Gastrocnemius medialis (tissue), 4 donors: ENCODE measurements at regions of chr15 and their contacts with region 1.

Region 1: DNA sequence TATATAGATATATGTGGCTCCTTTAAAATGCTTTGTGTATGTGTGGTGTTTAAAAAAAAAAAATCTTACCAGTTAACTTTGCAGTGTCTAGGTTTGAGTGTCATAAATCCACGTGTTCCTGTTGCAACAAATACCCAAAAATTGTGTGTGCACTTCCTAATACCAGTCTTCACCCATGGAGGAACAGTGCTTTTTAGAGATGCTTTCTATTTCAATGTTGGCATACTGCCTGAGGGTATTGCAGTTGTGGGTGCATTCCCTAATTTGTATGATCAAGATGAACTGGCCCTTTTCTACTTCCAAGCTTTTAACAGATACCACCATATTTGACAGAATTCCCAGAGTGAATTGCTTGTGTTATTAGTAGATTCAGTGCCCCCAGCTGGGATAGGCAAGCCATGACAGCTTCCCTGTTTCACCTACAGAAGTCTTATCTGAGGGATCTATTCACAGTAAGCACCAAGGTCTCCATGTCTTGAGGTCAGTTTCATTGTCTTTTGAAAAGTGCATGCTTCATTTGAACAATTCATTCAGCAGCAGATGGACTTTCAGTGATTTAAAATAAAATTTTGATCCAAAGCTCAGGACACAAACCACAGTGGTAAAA is 68.9 kb upstream of the GOLGA6B start:
- DNase-seq: no peak
- ATAC-seq: no peak
- H3K4me3 ChIP-seq: no peak overlapping the region
- H3K27ac ChIP-seq: no peak overlapping the region
- H3K4me1 ChIP-seq: no peaks in the 10 kb centered on the region
- H3K27me3 ChIP-seq: no peaks in the 10 kb centered on the region
- CTCF ChIP-seq: no peak
- POLR2A ChIP-seq: no peak

Region 2: GRCh38 chr15:72671535-72671934 is 86.0 kb after region 1 on chr15:
- in situ Hi-C with region 1: loop called in 1 of 4 experiments (anchors 10 kb)
- intact Hi-C with region 1: no loop called
- DNase-seq: no peak
- ATAC-seq: no peak
- H3K4me3 ChIP-seq: no peak overlapping the region
- H3K27ac ChIP-seq: no peak overlapping the region
- H3K4me1 ChIP-seq: peaks cover 0 to 3% of the 10 kb centered on the region in 2 donors
- H3K27me3 ChIP-seq: peaks cover 0 to 9% (median 8%) of the 10 kb centered on the region in 3 donors
- CTCF ChIP-seq: no peak
- POLR2A ChIP-seq: no peak

Region 3: DNA sequence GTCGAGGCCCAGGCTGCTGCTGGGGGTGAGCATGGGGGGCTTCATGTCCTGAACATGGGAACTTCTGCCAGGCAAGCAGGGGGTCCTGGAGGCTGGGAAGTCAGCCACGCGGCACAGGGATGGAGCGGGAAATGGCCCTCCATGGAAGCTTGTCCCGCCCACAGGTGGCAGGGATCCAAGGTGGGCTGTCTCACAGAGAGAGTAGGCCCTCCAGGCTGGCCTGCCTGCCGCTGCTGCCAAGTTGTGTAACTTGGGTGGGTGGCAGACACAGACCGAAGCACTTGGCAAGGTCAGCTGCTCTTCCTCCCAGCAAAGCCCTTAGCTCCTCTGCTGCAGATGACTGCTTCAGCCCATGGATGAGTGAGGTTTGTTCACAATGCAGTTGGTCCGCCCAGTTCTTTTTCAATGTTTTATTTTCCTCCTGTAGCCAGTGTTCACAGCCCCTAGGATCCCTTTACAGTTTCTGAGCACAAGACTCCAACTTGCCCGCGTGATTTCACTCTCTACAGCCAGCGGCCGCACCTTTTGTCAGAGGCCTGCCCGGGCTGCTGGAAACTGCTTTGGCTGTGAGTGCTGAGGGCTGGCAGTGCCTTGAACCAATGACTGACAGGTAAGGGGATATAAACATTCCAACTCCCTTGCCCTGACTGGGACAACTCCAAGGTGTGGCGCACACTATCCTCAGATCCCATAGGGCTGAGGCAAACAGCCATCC is 756.5 kb after region 1 on chr15:
- in situ Hi-C with region 1: no loop called
- intact Hi-C with region 1: no loop called
- DNase-seq: no peak
- ATAC-seq: no peak
- H3K4me3 ChIP-seq: no peak overlapping the region
- H3K27ac ChIP-seq: no peak overlapping the region
- H3K4me1 ChIP-seq: no peaks in the 10 kb centered on the region
- H3K27me3 ChIP-seq: peaks cover 0 to 2% (median 0%) of the 10 kb centered on the region in 3 donors
- CTCF ChIP-seq: no peak
- POLR2A ChIP-seq: no peak